Activated naive CD4-positive, alpha-beta T cell treated with anti-CD3 and anti-CD28 coated beads for 36 hours (primary cell): ENCODE measurements at regions of chr12 and their contacts with region 1.

Region 1: DNA sequence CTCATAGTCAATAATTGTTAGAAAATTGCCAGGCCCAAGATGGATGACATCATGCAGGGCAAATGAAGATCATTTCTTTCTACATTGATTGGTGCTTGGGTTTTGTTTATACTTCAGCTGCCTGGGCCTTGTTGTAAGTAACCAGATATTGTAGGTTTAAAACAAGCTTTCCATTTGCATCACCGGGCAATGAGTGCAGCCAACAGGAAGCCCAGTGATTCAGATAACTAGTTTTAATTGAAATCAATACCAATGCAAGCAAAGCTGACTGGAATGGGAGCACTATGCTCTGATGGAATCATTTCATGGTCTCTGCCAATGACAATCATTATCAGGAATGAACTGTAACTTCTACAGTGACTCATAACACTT is 279.3 kb downstream of the DUSP6 start:
- DNase-seq: peak; percentile 32
- H3K4me3 Mint-ChIP-seq: no peak overlapping the region
- H3K27ac Mint-ChIP-seq: peak overlapping the region; percentile 57
- H3K4me1 Mint-ChIP-seq: peaks cover 36% of the 10 kb centered on the region
- H3K27me3 Mint-ChIP-seq: no peaks in the 10 kb centered on the region

Region 2: DNA sequence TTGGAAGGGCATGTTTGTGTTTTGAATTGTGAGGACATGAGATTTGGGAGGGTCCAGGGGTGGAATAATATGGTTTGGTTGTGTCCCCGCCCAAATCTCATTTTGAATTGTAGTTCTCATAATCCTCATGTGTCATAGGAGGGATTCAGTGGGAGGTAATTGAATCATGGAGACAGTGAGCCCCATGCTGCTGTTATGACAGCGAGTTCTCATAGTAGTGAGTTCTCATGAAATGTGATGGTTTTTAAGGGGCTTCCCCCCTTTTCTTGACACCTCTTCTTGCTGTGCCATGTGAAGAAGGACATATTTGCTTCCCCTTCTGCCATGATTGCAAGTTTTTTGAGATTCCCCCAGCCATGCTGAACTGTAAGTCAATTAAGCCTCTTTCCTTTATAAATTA is 19.3 kb after region 1 on chr12:
- CTCF ChIA-PET with region 1: interaction called, 3 read pairs
- intact Hi-C with region 1: loop called (anchors 2 kb)
- DNase-seq: no peak
- H3K4me3 Mint-ChIP-seq: no peak overlapping the region
- H3K27ac Mint-ChIP-seq: peak overlapping the region; percentile 69
- H3K4me1 Mint-ChIP-seq: peaks cover 8% of the 10 kb centered on the region
- H3K27me3 Mint-ChIP-seq: no peaks in the 10 kb centered on the region

Region 3: DNA sequence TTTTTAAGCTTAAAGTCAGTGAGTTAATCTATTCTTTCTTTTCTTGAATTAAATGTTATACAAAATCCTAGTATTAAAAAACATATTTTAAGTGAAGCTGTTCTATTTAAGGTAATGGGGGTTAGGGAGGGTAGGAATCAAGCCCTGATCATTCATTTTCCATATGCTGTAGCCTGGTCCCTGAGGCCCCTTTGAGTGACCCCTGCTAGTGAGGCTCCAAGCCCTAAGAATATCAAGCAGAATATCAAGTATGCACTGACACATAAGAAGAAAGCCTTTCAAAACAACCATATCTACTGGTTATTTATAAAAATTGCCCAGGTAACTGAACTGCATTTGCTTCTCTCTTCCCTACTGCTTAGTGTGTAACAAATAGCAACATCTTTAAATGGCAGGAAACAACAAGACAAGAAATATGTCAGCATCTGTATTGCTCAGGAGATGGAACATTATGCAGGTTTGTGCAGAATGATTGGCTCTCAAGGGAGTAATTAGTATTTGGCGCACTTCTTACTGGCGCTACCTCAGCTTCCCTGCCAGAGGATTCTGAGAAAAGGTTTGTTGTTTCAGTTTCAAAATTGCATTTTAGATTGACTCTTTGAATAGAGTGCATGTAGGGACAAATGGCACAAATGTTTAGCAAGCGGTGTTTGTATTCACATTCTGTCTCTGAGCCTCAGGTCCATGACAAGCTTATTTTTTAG is 56.3 kb after region 1 on chr12:
- CTCF ChIA-PET with region 1: no interaction called
- intact Hi-C with region 1: loop called (anchors 2 kb)
- DNase-seq: peak; percentile 7
- H3K4me3 Mint-ChIP-seq: no peak overlapping the region
- H3K27ac Mint-ChIP-seq: no peak overlapping the region
- H3K4me1 Mint-ChIP-seq: peaks cover 5% of the 10 kb centered on the region
- H3K27me3 Mint-ChIP-seq: no peaks in the 10 kb centered on the region

Region 4: GRCh38 chr12:89135976-89136634 is 63.1 kb after region 1 on chr12:
- CTCF ChIA-PET with region 1: no interaction called
- intact Hi-C with region 1: loop called (anchors 1 kb)
- DNase-seq: peak; percentile 9
- H3K4me3 Mint-ChIP-seq: no peak overlapping the region
- H3K27ac Mint-ChIP-seq: no peak overlapping the region
- H3K4me1 Mint-ChIP-seq: peaks cover 22% of the 10 kb centered on the region
- H3K27me3 Mint-ChIP-seq: no peaks in the 10 kb centered on the region

Region 5: DNA sequence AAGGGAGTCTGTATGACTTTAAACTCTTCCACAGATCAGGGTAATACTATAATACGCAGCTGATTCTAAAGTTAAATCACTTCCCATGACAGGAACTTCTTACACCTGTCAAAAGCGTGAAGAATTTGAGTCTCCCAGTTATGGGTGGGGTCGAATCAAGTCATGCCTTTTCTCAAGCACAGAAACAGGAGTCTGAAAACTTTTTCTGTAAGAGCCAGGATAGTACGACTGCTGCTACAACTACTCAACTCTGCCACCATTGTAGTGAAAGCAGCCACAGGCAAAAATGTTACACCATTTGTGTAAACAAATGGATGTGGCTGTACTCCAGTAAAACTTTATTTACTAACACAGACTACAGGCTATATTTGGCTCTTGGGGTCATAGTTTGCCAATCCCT is 189.0 kb after region 1 on chr12:
- CTCF ChIA-PET with region 1: no interaction called
- intact Hi-C with region 1: no loop called
- DNase-seq: no peak
- H3K4me3 Mint-ChIP-seq: no peak overlapping the region
- H3K27ac Mint-ChIP-seq: no peak overlapping the region
- H3K4me1 Mint-ChIP-seq: peaks cover 24% of the 10 kb centered on the region
- H3K27me3 Mint-ChIP-seq: no peaks in the 10 kb centered on the region